Calu3 (cell line): ENCODE measurements at regions of chr10 and their contacts with region 1.

Region 1: GRCh38 chr10:6580279-6581029 is 378 bp upstream of the PRKCQ start:
- DNase-seq: peak; percentile 89
- H3K4me3 Mint-ChIP-seq: peak overlapping the region; percentile 79
- H3K27ac Mint-ChIP-seq: peak overlapping the region; percentile 39
- H3K4me1 Mint-ChIP-seq: no peaks in the 10 kb centered on the region
- H3K27me3 Mint-ChIP-seq: peaks cover 43% of the 10 kb centered on the region
- CTCF ChIP-seq: peak; percentile 66

Region 2: GRCh38 chr10:6416892-6417512 is 163.5 kb before region 1 on chr10:
- CTCF ChIA-PET with region 1: no interaction called
- intact Hi-C with region 1: loop called (anchors 10 kb)
- DNase-seq: peak; percentile 27
- H3K4me3 Mint-ChIP-seq: no peak overlapping the region
- H3K27ac Mint-ChIP-seq: no peak overlapping the region
- H3K4me1 Mint-ChIP-seq: no peaks in the 10 kb centered on the region
- H3K27me3 Mint-ChIP-seq: peaks cover 15% of the 10 kb centered on the region
- CTCF ChIP-seq: peak; percentile 31

Region 3: GRCh38 chr10:6647811-6648526 is 67.5 kb after region 1 on chr10:
- CTCF ChIA-PET with region 1: no interaction called
- intact Hi-C with region 1: loop called (anchors 10 kb)
- DNase-seq: peak; percentile 71
- H3K4me3 Mint-ChIP-seq: no peak overlapping the region
- H3K27ac Mint-ChIP-seq: no peak overlapping the region
- H3K4me1 Mint-ChIP-seq: no peaks in the 10 kb centered on the region
- H3K27me3 Mint-ChIP-seq: peaks cover 82% of the 10 kb centered on the region
- CTCF ChIP-seq: peak; percentile 88

Region 4: DNA sequence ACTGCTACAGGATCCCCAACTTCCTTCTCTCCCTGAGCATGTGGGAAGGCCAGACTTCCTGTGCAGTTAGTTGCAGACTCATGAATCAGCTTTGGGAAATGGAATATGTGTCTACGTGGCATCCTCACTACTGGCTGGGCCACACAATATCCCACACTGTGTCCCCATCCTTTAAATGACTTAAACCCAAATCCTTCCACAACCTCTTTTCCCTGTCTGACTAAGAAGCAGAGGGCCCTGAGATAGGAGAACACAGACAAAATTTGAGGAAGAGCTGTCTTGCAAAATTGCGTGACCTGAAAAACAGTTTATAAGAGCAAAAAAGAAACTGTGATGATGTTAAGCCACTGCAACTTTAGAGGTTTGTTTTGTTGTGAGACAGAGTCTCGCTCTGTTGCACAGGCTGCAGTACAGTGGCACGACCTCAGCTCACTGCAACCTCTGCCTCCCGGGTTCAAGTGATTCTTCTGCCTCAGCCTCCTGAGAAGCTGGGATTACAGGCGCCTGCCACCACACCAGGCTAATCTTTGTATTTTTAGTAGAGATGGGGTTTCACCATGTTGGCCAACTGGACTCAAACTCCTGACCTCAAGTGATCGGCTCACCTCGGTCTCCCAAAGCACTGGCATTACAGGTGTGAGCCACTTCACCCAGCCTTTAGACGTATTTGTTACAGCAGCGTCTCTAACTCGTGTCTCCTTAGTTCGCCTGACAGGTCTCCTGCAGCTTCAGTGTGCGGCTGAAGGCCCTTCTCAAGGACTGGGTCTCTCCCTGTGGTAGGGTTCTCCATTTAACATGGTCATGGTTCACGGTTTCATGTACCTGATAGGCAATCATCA is 877.2 kb after region 1 on chr10:
- CTCF ChIA-PET with region 1: no interaction called
- intact Hi-C with region 1: no loop called
- DNase-seq: no peak
- H3K4me3 Mint-ChIP-seq: no peak overlapping the region
- H3K27ac Mint-ChIP-seq: no peak overlapping the region
- H3K4me1 Mint-ChIP-seq: no peaks in the 10 kb centered on the region
- H3K27me3 Mint-ChIP-seq: peaks cover 78% of the 10 kb centered on the region
- CTCF ChIP-seq: no peak